ENCODE measurements at regions of chr20 and their contacts with region 1.

Region 1: DNA sequence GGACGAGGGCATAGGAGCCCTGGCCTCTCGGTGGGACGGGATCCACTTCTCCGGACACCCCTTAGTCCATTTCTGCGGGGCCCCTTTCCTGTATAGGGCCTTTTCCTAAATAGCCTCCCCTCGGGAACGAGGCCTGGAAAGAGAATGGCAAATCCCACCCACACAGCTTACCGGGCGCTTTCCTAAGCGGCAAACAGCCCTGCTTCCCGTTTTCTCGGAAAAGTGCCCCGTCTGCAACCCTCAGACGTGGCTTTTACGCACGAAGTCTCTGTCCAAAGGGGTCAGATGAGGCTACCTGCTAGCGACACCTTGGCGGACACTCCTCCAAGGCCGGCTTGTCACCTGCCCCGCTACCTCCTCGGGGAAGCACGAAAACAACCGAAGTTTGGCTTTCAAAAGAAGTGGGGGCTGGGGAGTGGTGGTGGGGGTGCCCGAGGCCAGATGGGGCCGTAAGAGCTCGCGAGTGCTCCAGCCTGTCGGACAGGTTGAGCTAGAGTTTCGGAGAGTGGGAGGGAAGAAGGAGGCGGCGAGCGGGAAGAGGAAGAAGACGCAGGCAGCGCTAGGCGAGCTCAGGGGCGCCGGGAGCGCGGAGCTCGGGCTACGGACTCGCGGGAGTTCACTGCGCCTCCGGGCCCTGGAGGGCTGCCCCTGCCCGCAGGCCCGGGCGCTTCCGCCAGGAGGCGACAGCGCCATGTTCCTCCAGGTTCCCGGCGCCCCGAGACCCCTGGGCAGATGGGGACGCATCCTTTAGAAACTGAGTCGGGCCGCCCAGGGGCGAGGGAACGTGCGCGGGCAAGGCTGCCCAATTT is 768 bp downstream of the TFAP2C start:
- DNase-seq: peak; percentile 83 to 88
- ATAC-seq: peak; percentile 76 to 87
- H3K4me3 ChIP-seq: peak overlapping the region; percentile 86
- H3K27ac ChIP-seq: peak overlapping the region; percentile 90 to 94
- H3K4me1 ChIP-seq: peaks cover 33% of the 10 kb centered on the region
- CTCF ChIP-seq: peak; percentile 88
- EP300 ChIP-seq: no peak
- POLR2A ChIP-seq: no peak
- RAD21 ChIP-seq: peak; percentile 69 to 94

Region 2: DNA sequence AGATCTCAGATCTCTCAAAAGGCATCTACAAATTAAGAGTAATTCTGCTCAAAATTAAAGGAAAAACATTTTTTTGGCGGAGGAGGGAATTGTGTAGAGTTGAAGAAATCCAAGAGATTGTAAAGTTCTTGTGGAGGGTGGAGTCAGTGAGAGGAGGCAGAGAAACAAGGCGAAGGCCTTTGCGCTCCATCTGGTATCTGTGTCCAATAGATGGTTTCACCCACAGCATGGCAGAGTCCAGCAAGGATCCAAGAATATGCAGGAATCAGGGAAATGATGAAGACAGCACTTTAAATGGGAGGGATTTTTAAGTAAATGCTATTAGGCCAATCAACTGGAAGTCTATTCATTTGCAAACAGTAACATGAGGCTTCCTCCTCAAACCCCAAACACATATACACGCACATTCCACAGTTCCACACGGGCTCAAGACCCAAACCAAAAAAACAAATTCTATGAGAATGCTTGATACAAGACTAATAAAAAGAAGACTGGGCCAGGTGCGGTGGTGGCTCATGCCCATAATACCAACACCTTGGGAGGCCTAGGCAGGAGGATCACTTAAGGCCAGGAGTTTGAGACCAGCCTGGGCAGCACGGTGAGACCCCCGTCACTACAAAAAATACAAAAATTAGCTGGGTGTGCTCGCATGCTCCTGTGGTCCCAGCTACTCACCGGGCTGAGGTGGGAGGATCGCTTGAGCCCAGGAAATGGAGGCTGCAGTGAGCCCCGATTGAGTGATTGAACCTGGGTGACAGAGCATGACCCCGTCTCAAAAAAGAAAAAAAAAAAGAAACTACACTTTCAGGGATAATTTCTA is 22.8 kb before region 1 on chr20:
- CTCF ChIA-PET with region 1: interaction called, 13 read pairs
- POLR2A ChIA-PET with region 1: no interaction called
- DNase-seq: no peak
- ATAC-seq: no peak
- H3K4me3 ChIP-seq: no peak overlapping the region
- H3K27ac ChIP-seq: no peak overlapping the region; a peak in 1 of 6 replicates
- H3K4me1 ChIP-seq: peaks cover 19% of the 10 kb centered on the region
- CTCF ChIP-seq: no peak
- EP300 ChIP-seq: no peak
- POLR2A ChIP-seq: no peak
- RAD21 ChIP-seq: no peak

Region 3: DNA sequence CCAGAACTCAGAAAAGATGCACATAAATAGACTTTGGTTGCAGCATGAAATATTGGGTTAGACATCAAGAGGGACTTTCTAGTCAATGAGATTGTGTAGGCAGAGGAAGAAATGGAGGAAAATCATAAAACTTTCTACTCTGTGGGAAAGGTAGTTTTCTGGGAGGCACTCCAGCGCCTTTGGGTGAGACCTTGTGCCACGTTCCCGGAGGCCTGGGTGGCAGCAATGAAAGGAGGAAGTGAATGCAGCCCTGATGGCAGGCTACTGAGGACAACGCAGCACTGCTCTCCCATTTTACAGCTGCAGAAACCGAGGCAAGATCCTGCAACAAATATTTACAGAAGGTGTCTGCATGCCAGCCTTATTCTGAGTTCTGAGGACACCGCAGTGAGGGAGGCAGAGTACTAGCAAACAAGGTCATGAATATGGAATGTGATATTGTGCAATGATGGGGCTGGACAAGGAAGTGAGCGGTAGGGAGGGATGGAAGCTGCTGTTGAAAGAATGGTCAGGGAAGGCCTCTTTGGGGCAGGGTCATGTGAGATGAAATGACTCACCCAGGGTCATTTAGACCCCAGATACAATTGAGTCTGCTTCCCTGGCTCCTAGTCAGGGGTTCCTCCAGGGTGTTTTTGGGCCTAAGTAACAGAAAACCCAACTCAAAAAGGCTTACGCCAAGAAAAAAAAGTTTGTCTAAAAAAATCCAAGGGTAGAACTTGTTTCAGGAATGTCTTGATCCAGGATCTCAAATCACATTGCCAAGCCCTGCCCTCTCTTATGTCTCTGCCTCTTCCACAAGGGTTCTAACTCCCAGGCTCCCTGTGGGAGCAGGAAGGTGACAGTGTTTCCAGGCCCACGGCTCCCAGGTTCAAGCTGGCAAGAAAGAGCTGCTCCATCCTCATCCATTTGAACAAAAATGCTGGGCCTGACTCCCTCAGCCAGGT is 158.4 kb after region 1 on chr20:
- CTCF ChIA-PET with region 1: interaction called, 11 read pairs
- POLR2A ChIA-PET with region 1: interaction called, 15 read pairs
- DNase-seq: peak; percentile 86 to 100
- ATAC-seq: peak; percentile 89 to 96
- H3K4me3 ChIP-seq: peak overlapping the region; percentile 29; the same call in 2 of the 3 replicates
- H3K27ac ChIP-seq: peak overlapping the region; percentile 96 to 97
- H3K4me1 ChIP-seq: peaks cover 69% of the 10 kb centered on the region
- CTCF ChIP-seq: no peak
- EP300 ChIP-seq: peak; percentile 95 to 97; a peak in 4 of 5 replicates
- POLR2A ChIP-seq: no peak
- RAD21 ChIP-seq: peak; percentile 30 to 42; a peak in 4 of 5 replicates

Region 4: DNA sequence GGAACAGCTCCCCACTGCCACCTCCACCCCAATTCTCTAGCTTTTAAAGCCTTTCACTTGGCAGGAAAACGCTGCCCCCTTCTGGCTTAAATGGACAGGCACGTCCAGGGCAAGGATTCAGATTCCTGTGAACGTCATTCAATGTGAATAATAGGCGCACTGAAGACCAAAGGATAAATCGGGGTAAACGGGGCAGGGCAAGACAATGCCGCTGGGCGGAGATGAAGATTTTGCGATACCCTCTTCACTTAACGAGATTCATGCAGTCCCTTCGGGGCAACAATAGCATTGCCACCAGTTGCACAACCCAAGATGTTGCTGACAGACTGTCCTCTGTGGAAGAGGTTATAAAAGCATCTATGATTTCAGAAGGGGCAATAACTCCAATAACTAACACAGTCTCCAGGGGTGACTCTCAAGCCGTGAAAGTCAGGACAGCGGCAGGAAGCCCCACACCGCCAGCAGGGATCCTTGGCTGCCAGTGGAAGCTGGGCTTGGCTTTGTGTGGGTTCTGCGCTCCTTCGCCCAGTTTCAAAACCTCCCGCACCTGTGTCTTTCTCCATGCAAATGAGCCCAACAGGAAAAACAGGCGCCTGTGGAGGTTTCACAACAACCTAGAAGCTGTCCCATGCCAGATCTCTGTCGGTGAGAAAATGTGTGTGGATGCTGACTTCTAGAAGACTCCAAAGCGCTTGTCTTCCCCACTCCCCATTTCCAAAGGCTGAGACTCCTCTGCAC is 344.8 kb after region 1 on chr20:
- CTCF ChIA-PET with region 1: interaction called, 121 read pairs
- POLR2A ChIA-PET with region 1: interaction called, 5 read pairs
- DNase-seq: peak; percentile 64 to 81
- ATAC-seq: peak; percentile 87 to 91
- H3K4me3 ChIP-seq: no peak overlapping the region
- H3K27ac ChIP-seq: peak overlapping the region; percentile 47 to 66; a peak in 4 of 6 replicates
- H3K4me1 ChIP-seq: peaks cover 12% of the 10 kb centered on the region
- CTCF ChIP-seq: peak; percentile 88
- EP300 ChIP-seq: no peak
- POLR2A ChIP-seq: no peak
- RAD21 ChIP-seq: peak; percentile 95 to 98

Region 5: GRCh38 chr20:56995576-56996075 is 365.8 kb after region 1 on chr20:
- CTCF ChIA-PET with region 1: interaction called, 11 read pairs
- POLR2A ChIA-PET with region 1: no interaction called
- DNase-seq: peak; percentile 36 to 45
- ATAC-seq: peak; percentile 60 to 79; a peak in 4 of 6 replicates
- H3K4me3 ChIP-seq: no peak overlapping the region
- H3K27ac ChIP-seq: no peak overlapping the region
- H3K4me1 ChIP-seq: no peaks in the 10 kb centered on the region
- CTCF ChIP-seq: peak; percentile 52
- EP300 ChIP-seq: no peak
- POLR2A ChIP-seq: no peak
- RAD21 ChIP-seq: peak; percentile 56 to 58

Region 6: GRCh38 chr20:57061058-57061900 is 431.4 kb after region 1 on chr20:
- CTCF ChIA-PET with region 1: interaction called, 16 read pairs
- POLR2A ChIA-PET with region 1: no interaction called
- DNase-seq: peak; percentile 47 to 67
- ATAC-seq: peak; percentile 64 to 94; a peak in 3 of 6 replicates
- H3K4me3 ChIP-seq: no peak overlapping the region
- H3K27ac ChIP-seq: no peak overlapping the region
- H3K4me1 ChIP-seq: 0 out of 3 replicates have a peak, but pooled peaks cover 4% of the 10 kb centered on the region
- CTCF ChIP-seq: peak; percentile 51
- EP300 ChIP-seq: no peak
- POLR2A ChIP-seq: no peak
- RAD21 ChIP-seq: peak; percentile 69 to 86